GM10248 (cell line): ENCODE measurements at regions of chr2 and their contacts with region 1.

Region 1: GRCh38 chr2:230913406-230914143 is 11.5 kb downstream of the GPR55 start:
- DNase-seq: no peak
- CTCF ChIP-seq: peak; percentile 33

Region 2: DNA sequence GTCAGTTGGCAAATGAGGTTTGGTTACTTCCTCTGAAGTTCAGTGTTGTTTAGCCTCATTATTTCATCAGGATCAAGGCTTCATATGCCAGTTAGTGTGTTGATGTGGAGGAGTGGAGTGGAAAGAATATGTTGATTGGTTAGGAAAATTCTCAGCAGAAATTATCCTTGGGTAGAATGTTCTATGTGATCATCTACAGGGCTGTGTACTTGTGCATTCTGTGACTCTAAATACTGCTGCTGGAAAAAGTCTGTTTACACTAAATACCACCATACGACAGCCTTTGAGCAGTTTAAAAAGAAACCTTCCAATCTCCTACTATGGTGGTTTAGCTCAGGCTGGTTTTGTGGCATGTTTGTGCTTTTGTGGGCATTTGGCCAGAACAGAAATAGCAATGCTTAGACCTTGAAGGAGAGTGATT is 175.2 kb before region 1 on chr2:
- CTCF ChIA-PET with region 1: no interaction called
- POLR2A ChIA-PET with region 1: no interaction called
- DNase-seq: no peak
- CTCF ChIP-seq: no peak

Region 3: DNA sequence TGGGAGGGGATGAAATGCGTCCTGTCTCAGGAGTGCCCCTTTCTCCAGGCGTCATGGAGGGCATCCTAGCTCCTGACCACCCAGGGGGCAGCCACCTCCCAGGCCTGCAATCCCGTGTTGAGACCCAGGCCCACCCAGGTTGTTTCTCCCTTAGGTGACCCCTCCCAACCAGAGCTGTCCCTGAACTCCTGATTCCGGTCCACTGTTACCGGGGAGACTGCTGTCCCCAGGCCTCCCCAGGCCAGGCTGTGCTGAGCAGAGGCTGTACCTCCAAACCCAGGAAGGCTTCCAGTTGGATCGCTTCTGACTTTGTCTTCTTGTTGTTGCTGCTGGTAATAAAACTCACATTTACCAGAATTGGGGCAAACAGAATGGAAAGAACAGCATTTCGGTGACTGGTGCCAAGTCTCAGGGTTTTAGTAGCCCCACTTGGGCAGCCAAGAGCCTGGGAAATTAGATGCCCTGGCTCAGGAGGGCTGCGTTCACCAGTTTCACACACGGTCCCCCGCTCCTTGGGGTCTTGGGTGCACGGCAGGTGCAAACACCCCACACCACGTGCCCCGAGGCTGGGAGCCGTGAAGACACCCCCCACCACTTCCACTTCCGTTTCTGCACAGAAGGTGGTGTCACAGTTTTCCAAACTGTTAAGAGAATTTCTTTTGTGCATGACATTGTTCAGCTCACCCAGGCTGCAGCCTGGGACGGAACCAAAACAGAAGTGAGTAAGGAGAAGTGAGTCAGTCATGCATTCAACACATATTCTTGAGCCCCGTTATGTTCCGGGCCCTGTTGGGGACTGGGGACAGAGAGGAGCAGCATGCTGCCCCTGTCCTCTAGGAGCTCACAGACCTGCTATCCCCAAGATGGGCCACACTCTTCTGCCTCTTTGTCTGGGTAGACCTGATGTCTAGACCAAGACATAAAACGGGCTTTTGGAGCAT is 19.5 kb before region 1 on chr2:
- CTCF ChIA-PET with region 1: interaction called, 17 read pairs
- POLR2A ChIA-PET with region 1: no interaction called
- DNase-seq: peak; percentile 60
- CTCF ChIP-seq: no peak

Region 4: GRCh38 chr2:230902180-230902899 is 11.2 kb before region 1 on chr2:
- CTCF ChIA-PET with region 1: interaction called, 54 read pairs
- POLR2A ChIA-PET with region 1: interaction called, 4 read pairs
- DNase-seq: peak; percentile 77
- CTCF ChIP-seq: peak; percentile 97